ENCODE measurements at regions of chr22 and their contacts with region 1.

Region 1: DNA sequence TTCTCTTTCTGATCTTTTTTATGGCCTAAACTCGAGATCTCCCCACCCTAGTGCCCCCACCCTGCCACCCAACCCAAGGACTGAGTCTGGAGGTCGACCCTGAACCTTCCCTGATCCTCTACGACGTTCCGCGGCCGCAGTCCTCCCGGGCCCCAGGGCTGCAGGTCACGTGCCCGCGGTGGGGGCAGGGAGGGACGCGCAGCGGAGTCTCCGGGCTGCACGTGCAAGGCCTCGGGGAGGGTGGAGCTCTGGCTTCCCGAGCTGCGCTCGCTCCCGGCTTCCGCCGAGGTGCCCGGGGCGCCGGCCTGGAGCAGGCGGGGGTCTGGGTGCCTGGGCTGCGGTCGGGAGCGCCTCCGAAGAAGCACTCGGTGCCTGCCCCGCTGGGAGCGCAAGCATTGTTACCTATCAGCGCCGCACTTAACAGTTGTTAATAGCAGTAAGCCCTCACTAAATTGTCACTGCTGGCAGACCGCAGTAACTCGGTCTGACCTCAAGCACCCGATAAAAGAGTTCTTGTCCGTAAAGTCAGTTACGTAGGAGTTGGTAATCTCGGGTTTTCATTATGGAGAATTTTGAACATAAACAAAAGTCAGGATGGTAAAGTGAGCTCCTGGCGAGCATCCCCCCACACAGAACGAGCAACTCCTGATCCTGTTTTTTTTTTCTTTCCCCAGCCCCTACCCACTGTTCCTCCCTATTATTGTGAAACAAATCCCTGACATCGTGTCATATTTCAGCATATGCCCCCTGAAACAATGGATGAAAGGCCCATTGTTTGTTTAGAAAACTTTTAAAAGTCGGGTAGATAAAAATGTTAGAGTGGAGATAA is 69.7 kb upstream of the EP300 start:
- DNase-seq: peak; percentile 87
- ATAC-seq: peak; percentile 71
- H3K4me3 ChIP-seq: peak overlapping the region; percentile 11 to 96 (median 70)
- H3K4me3 Mint-ChIP-seq: peak overlapping the region; percentile 88
- H3K27ac ChIP-seq: peak overlapping the region; percentile 83 to 86
- H3K27ac Mint-ChIP-seq: peak overlapping the region; percentile 94
- H3K4me1 ChIP-seq: peaks cover 8 to 14% of the 10 kb centered on the region in 2 donors
- H3K4me1 Mint-ChIP-seq: peaks cover 12% of the 10 kb centered on the region
- H3K27me3 ChIP-seq: no peaks in the 10 kb centered on the region
- H3K27me3 Mint-ChIP-seq: no peaks in the 10 kb centered on the region
- CTCF ChIP-seq: no peak

Region 2: GRCh38 chr22:40856513-40857308 is 166.0 kb before region 1 on chr22 and contains the starts of genes ST13 and XPNPEP3:
- CTCF ChIA-PET with region 1: no interaction called
- POLR2A ChIA-PET with region 1: interaction called, 3 read pairs
- intact Hi-C with region 1: loop called (anchors 5 kb)
- DNase-seq: peak; percentile 98
- ATAC-seq: peak; percentile 88
- H3K4me3 ChIP-seq: peak within 1 kb of the TSS; percentile 82 to 98 (median 94)
- H3K4me3 Mint-ChIP-seq: peak within 1 kb of the TSS; percentile 97
- H3K27ac ChIP-seq: peak within 1 kb of the TSS; percentile 91 to 94
- H3K27ac Mint-ChIP-seq: peak within 1 kb of the TSS; percentile 100
- H3K4me1 ChIP-seq: peaks cover 24 to 28% of the 10 kb centered on the region in 2 donors
- H3K4me1 Mint-ChIP-seq: peaks cover 46% of the 10 kb centered on the region
- H3K27me3 ChIP-seq: no peaks in the 10 kb centered on the region
- H3K27me3 Mint-ChIP-seq: no peaks in the 10 kb centered on the region
- CTCF ChIP-seq: peak; percentile 71
- total RNA-seq, gene ST13: 175 and 187 TPM in 2 replicates
- total RNA-seq, gene XPNPEP3: 18.9 and 24.2 TPM in 2 replicates

Region 3: GRCh38 chr22:41070665-41071331 is 48.1 kb after region 1 on chr22:
- CTCF ChIA-PET with region 1: interaction called, 3 read pairs
- POLR2A ChIA-PET with region 1: interaction called, 18 read pairs
- intact Hi-C with region 1: loop called (anchors 1 kb)
- DNase-seq: no peak
- ATAC-seq: no peak
- H3K4me3 ChIP-seq: no peak overlapping the region
- H3K4me3 Mint-ChIP-seq: no peak overlapping the region
- H3K27ac ChIP-seq: peak overlapping the region in 1 of 2 donors; percentile 41
- H3K27ac Mint-ChIP-seq: no peak overlapping the region
- H3K4me1 ChIP-seq: peaks cover 33 to 34% of the 10 kb centered on the region in 2 donors
- H3K4me1 Mint-ChIP-seq: peaks cover 28% of the 10 kb centered on the region
- H3K27me3 ChIP-seq: no peaks in the 10 kb centered on the region
- H3K27me3 Mint-ChIP-seq: no peaks in the 10 kb centered on the region
- CTCF ChIP-seq: no peak

Measured in B cell (primary cell).